ENCODE measurements at regions of chrX and their contacts with region 1.

Region 1: DNA sequence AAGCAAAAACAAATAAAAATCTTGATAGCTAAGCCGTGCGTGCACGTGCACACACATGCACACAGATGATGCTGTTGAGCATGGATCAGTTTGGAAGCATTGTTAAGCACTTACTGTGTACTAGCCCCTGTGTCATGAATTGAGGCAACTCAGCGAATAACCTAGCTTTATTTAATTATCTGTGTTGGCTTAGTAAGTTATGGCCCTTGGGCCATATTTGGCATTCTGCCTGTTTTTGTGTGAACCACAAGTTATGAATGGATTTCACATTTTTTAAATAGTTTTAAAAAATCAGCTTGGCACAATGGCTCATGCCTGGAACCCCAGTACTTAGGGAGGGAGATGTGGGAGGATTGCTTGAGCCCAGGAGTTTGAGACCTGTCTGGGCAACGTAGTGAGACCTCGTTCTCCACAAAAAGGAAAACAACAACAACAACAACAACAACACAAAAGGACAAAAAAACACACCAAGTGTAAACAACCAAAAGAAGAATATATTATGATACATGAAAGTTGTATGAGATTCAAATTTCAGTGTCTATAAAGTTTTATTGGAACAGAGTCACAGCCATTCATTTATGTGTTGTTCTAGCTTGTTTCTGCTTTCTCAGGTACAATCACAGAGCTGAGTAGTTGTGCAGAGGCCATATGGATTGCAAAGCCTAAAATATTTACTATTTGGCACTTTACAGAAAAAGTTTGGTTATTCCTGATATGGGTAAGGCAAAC is 113.5 kb upstream of the CBLL2 start:
- DNase-seq: no peak

Region 2: DNA sequence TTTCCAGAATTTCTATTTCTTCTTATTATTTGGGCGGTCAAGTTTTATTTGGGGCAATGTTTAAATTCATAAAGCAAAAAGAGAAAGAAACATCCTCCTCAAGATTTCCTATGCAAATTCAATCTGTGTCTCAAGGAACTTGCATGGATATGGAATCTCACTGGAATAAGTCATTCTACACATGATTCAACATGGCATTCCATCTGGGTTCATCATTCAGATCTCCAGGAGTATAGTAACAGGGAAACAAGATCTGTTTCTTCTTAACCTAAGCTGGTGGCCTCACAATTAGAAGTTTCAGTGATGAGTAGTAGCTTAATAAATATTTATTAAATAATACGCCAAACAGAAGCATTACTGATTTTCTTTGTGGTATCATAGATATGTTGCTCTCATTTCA is 520.9 kb before region 1 on chrX:
- intact Hi-C with region 1: loop called in 1 of 2 experiments (anchors 5 kb)
- DNase-seq: no peak

Measured in posterior vena cava (tissue), 2 donors.